ENCODE measurements at regions of chr16 and their contacts with region 1.

Region 1: DNA sequence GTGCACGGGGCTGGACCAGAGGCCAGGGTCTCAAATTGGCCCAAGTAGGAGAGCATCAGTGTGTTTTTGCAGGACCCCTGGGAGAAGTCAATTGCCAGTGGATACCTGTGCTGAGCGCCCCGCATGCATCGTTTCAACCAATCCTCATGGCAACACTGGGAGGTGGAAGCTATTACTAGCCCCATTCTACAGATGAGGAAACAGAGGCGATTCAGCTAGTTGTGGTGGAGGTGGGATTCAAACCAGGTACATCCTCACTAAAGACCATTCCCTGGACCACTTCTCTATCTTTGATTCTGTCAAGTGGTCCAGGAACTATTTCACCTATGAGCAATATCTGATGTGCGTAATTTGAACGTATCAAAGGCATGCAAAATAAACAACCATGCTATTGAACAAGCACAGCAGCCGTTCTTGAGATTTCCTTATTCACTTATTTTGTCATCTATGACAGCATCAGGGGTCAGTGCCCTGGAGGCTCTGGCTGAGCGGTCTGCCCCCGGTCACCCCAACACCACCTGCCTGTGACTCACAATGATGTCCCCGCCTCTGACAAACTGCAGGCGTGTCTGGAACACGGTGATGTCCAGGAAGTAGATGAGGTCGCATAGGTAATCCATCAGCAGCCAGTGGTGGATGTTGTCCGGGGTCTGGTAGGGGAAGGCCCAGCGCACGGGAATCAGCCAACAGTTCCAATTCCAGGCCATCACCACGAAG is 54.0 kb downstream of the CNGB1 start:
- DNase-seq: no peak
- ATAC-seq: peak; percentile 49
- H3K4me3 ChIP-seq: no peak overlapping the region
- H3K27ac ChIP-seq: no peak overlapping the region
- H3K4me1 ChIP-seq: peaks cover 0 to 5% of the 10 kb centered on the region in 2 experiments; a peak in 2 of 4 replicates
- H3K27me3 ChIP-seq: no peaks in the 10 kb centered on the region
- CTCF ChIP-seq: no peak
- POLR2A ChIP-seq: no peak
- RAD21 ChIP-seq: no peak

Region 2: GRCh38 chr16:58292886-58293285 is 376.0 kb after region 1 on chr16:
- CTCF ChIA-PET with region 1: no interaction called
- POLR2A ChIA-PET with region 1: no interaction called
- RAD21 ChIA-PET with region 1: no interaction called
- intact Hi-C with region 1: loop called (anchors 5 kb)
- DNase-seq: no peak
- ATAC-seq: no peak
- H3K4me3 ChIP-seq: no peak overlapping the region
- H3K27ac ChIP-seq: no peak overlapping the region
- H3K4me1 ChIP-seq: no peaks in the 10 kb centered on the region
- H3K27me3 ChIP-seq: no peaks in the 10 kb centered on the region
- CTCF ChIP-seq: no peak
- POLR2A ChIP-seq: no peak
- RAD21 ChIP-seq: no peak

Region 3: GRCh38 chr16:59459806-59460205 is 1542.9 kb after region 1 on chr16:
- CTCF ChIA-PET with region 1: no interaction called
- POLR2A ChIA-PET with region 1: no interaction called
- RAD21 ChIA-PET with region 1: no interaction called
- intact Hi-C with region 1: no loop called
- DNase-seq: no peak
- ATAC-seq: no peak
- H3K4me3 ChIP-seq: no peak overlapping the region
- H3K27ac ChIP-seq: no peak overlapping the region
- H3K4me1 ChIP-seq: no peaks in the 10 kb centered on the region
- H3K27me3 ChIP-seq: no peaks in the 10 kb centered on the region
- CTCF ChIP-seq: no peak
- POLR2A ChIP-seq: no peak
- RAD21 ChIP-seq: no peak

Measured in HCT116 (cell line).